Activated naive CD4-positive, alpha-beta T cell treated with anti-CD3 and anti-CD28 coated beads for 36 hours (primary cell): ENCODE measurements at regions of chr7 and their contacts with region 1.

Region 1: DNA sequence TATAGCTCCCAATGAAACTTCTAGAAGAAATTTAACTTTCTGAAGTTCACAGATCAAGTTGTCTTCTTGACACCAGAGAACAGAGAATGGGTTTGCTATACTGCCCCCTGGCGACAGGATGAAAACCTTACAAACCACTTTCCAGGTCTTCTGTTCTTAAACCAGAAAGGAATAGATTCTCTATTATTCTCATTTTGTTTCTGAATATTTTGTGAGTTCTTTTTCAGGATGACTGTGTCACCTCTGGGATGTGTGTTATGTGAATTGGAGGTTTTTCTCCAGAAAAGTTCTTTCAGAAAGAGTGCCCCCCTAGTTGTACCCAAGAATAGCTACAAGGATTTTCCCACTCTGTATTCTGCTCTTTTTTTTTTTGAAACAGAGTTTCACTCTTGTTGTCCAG is 6.3 kb downstream of the IFT22 start:
- DNase-seq: peak; percentile 74
- H3K4me3 Mint-ChIP-seq: no peak overlapping the region
- H3K27ac Mint-ChIP-seq: no peak overlapping the region
- H3K4me1 Mint-ChIP-seq: peaks cover 1% of the 10 kb centered on the region
- H3K27me3 Mint-ChIP-seq: no peaks in the 10 kb centered on the region

Region 2: DNA sequence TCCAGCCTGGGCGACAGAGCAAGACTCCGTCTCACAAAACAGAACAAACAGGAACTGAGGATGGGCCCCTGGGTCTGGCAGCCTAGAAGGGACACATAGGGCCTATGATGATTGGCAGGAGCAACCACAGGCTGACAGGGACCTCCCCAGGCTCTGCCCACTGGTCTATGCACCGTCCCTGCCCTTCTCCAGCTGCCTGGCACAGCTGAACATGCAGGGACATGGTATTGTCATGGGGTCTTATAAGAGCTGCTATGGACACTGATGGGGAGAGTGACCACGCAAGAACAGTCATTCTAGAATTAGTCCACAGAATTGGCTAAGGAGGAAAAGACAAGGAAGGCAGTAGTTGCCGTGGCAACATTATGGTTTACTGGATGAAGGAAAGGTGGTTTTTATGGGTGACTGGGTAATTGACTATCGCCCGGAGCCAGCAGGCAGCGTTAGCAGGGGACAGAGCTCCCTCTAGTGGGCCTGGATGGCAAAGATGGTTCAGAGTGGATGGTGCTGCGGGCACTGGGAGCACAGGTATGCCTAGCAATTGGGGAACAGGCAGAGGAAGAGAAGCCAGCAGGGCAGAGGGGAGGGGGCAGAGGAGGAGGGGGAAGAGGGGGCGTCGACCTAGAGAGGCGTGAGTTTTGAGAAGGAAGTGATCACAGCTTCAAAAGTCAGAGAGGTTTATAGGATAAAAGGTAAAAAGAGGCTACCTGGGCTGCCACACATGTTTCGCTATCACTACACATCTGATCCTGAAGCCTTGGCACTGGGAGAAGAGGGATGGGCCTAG is 237.8 kb before region 1 on chr7:
- CTCF ChIA-PET with region 1: no interaction called
- intact Hi-C with region 1: no loop called
- DNase-seq: peak; percentile 94
- H3K4me3 Mint-ChIP-seq: no peak overlapping the region
- H3K27ac Mint-ChIP-seq: no peak overlapping the region
- H3K4me1 Mint-ChIP-seq: peaks cover 7% of the 10 kb centered on the region
- H3K27me3 Mint-ChIP-seq: no peaks in the 10 kb centered on the region

Region 3: GRCh38 chr7:101410743-101411507 is 95.6 kb after region 1 on chr7:
- CTCF ChIA-PET with region 1: interaction called, 11 read pairs
- intact Hi-C with region 1: no loop called
- DNase-seq: peak; percentile 54
- H3K4me3 Mint-ChIP-seq: no peak overlapping the region
- H3K27ac Mint-ChIP-seq: no peak overlapping the region
- H3K4me1 Mint-ChIP-seq: peaks cover 8% of the 10 kb centered on the region
- H3K27me3 Mint-ChIP-seq: no peaks in the 10 kb centered on the region